ENCODE measurements at regions of chr17 and their contacts with region 1.

Region 1: DNA sequence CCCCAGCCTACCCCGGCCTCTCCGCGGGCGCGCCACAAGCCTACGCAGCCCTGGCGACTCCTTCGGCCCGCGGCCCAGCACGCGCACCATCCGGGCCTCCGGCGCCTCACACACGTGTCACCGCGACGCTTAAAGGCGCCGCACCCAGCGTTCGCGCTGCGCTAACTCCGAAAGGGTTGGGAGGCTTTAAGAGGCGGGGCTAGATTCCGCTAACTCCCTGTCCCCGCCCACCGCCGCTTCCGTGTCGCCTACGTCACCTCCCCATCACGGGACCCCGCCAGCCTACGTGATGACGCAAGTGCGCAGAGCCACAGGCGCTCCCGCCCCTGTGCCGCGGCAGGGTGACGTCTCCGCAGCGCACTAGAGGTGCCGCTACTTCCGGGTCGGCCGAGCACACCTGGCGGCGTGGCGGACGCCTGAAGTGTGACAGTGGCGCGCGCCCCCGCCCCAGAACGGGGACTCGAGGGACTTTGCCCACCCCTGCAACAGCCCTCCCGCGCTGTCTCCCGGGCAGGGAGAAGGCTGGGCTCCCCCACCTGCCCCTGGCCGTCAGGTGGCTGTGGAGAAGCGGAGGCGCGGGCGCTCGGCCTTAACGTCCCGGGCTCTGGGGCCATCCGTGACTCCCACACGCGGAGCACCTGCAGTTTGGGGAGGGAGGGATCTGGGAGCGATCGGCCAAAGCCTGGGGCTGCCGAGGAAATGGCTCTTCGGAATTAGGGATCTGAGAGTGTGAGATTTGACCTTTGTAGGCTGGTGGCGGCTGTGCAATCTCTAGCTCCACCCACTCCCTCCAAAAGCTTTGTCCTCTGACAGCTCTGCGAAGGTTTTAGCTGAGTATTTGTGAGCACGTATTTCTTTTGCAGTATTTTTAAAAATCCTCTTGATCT is at the start of gene USP36:
- DNase-seq: peak; percentile 99
- H3K4me3 Mint-ChIP-seq: peak within 1 kb of the TSS; percentile 91
- H3K27ac Mint-ChIP-seq: peak within 1 kb of the TSS; percentile 94
- H3K4me1 Mint-ChIP-seq: peaks cover 35% of the 10 kb centered on the region
- H3K27me3 Mint-ChIP-seq: no peaks in the 10 kb centered on the region
- total RNA-seq, gene USP36: 103 and 105 TPM in 2 replicates

Region 2: DNA sequence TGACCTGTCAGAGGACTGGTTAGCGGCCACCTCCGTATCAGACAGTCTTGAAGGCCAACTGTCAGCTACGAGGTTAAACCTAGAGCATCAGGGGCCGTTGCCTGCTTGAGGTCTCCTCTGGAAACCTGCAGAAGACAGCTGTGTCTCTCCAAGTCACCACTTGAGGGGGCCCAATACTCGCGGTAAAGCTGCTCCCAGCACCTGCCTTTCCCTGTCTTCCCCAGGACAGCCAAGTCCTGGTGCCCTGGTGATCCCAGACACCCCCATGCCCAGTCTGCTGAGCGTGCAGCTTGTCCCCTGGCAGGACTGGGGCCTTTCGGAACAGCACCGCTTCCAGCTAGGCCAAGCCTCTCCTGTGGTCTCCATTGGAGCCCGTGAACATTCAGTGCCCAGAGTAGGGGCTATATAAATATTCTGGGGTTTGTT is 343.8 kb before region 1 on chr17:
- intact Hi-C with region 1: loop called (anchors 5 kb)
- DNase-seq: peak; percentile 30
- H3K4me3 Mint-ChIP-seq: no peak overlapping the region
- H3K27ac Mint-ChIP-seq: no peak overlapping the region
- H3K4me1 Mint-ChIP-seq: no peaks in the 10 kb centered on the region
- H3K27me3 Mint-ChIP-seq: no peaks in the 10 kb centered on the region

Measured in activated T-helper 2 cell treated with anti-CD3 and anti-CD28 coated beads, Interferon-gamma antibody, Interleukin-2, Interleukin-4, amounts not matched to agents 10 μg/mL and 5 μg/mL and 100 μg/mL, durations not matched to agents 14 hours and 24 hours and 36 hours (primary cell).